IMR-90 (cell line): ENCODE measurements at regions of chr3 and their contacts with region 1.

Region 1: GRCh38 chr3:64030741-64031140 is 7.4 kb upstream of the PSMD6 start:
- DNase-seq: peak; percentile 60
- ATAC-seq: peak; percentile 97
- H3K4me3 ChIP-seq: peak overlapping the region; percentile 20; the same call in 1 of the 2 replicates
- H3K27ac ChIP-seq: no peak overlapping the region
- H3K4me1 ChIP-seq: peaks cover 3% of the 10 kb centered on the region; the same call in 1 of the 2 replicates
- H3K27me3 ChIP-seq: peaks cover 4% of the 10 kb centered on the region
- CTCF ChIP-seq: peak; percentile 90
- POLR2A ChIP-seq: peak; percentile 52; the same call in 1 of the 2 replicates
- RAD21 ChIP-seq: peak; percentile 97

Region 2: GRCh38 chr3:63855333-63855917 is 175.3 kb before region 1 on chr3:
- CTCF ChIA-PET with region 1: no interaction called
- POLR2A ChIA-PET with region 1: no interaction called
- dilution Hi-C with region 1: no loop called
- in situ Hi-C with region 1: no loop called
- intact Hi-C with region 1: no loop called
- DNase-seq: no peak
- ATAC-seq: peak; percentile 59
- H3K4me3 ChIP-seq: no peak overlapping the region
- H3K27ac ChIP-seq: no peak overlapping the region
- H3K4me1 ChIP-seq: peaks cover 1% of the 10 kb centered on the region; the same call in 1 of the 2 replicates
- H3K27me3 ChIP-seq: no peaks in the 10 kb centered on the region
- CTCF ChIP-seq: no peak
- POLR2A ChIP-seq: no peak
- RAD21 ChIP-seq: no peak

Region 3: GRCh38 chr3:64224826-64225610 is 194.3 kb after region 1 on chr3 and contains the start of gene PRICKLE2:
- CTCF ChIA-PET with region 1: interaction called, 3 read pairs
- POLR2A ChIA-PET with region 1: no interaction called
- dilution Hi-C with region 1: no loop called
- in situ Hi-C with region 1: loop called (anchors 25 kb)
- intact Hi-C with region 1: loop called (anchors 2 kb)
- DNase-seq: peak; percentile 96
- ATAC-seq: peak; percentile 73
- H3K4me3 ChIP-seq: peak within 1 kb of the TSS; percentile 38
- H3K27ac ChIP-seq: peak within 1 kb of the TSS; percentile 89
- H3K4me1 ChIP-seq: peaks cover 32% of the 10 kb centered on the region
- H3K27me3 ChIP-seq: no peaks in the 10 kb centered on the region
- CTCF ChIP-seq: peak; percentile 49
- POLR2A ChIP-seq: peak; percentile 67
- RAD21 ChIP-seq: peak; percentile 70
- total RNA-seq, gene PRICKLE2: 14.2 and 16.7 TPM in 2 replicates

Region 4: DNA sequence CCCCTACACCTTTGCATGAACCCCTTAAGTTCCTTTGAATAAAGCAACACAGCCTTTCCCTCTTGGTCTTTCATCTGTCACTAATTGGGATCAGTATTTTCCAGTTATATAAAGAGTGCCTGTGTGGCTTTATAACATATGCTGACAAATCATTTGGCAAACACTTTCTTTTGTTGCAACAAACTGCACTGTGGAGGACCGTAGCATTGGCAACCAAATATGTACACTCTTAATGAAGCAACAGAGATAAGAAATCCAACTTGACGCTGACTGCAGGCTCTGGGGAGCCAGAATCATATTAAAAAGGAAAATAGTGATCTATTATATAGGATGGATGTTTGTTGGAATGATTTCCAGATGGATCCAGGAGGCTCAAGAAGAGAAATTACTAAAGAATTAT is 314.6 kb after region 1 on chr3:
- CTCF ChIA-PET with region 1: no interaction called
- POLR2A ChIA-PET with region 1: no interaction called
- dilution Hi-C with region 1: no loop called
- in situ Hi-C with region 1: no loop called
- intact Hi-C with region 1: loop called (anchors 5 kb)
- DNase-seq: peak; percentile 89
- ATAC-seq: peak; percentile 4
- H3K4me3 ChIP-seq: no peak overlapping the region
- H3K27ac ChIP-seq: peak overlapping the region; percentile 77
- H3K4me1 ChIP-seq: peaks cover 30% of the 10 kb centered on the region
- H3K27me3 ChIP-seq: no peaks in the 10 kb centered on the region
- CTCF ChIP-seq: no peak
- POLR2A ChIP-seq: no peak
- RAD21 ChIP-seq: no peak

Region 5: GRCh38 chr3:64405211-64405835 is 374.6 kb after region 1 on chr3:
- CTCF ChIA-PET with region 1: no interaction called
- POLR2A ChIA-PET with region 1: no interaction called
- dilution Hi-C with region 1: no loop called
- in situ Hi-C with region 1: loop called (anchors 5 kb)
- intact Hi-C with region 1: no loop called
- DNase-seq: peak; percentile 67
- ATAC-seq: peak; percentile 82
- H3K4me3 ChIP-seq: no peak overlapping the region
- H3K27ac ChIP-seq: no peak overlapping the region; the same call in 1 of the 2 replicates
- H3K4me1 ChIP-seq: peaks cover 7% of the 10 kb centered on the region; the same call in 1 of the 2 replicates
- H3K27me3 ChIP-seq: no peaks in the 10 kb centered on the region
- CTCF ChIP-seq: no peak
- POLR2A ChIP-seq: no peak
- RAD21 ChIP-seq: no peak

Region 6: DNA sequence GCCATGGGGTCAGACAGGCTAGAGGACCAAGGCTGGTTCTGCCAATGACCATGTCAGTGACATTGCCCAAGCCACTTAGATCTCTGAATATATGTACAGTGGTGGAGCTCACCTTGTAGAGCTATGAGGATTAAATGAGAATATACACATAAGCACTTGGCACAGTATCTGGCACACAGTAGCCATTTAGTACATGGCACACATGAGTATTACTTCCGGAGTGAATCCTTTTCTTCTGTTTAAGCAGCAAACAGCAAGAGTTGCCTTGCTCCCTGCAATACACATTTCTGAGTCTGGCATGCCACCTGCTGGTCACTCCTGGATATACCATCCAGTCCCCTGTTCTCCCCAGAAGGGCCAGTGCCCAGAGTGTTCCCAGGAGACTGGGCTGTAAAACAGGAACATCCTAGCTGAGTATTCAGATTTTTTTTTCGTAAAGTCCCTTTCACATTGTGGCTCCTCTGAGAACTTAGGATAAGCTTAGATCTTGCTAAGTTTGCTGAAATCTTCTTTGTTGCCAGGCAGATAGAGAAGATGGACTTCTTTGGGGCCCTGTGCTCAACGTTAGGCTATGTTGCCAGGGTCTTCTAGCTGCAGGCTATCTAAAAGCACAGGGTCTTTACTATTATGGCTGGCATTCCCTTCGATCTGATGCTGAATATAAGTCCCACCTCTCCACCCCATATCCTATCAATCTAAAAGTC is 453.7 kb after region 1 on chr3:
- CTCF ChIA-PET with region 1: interaction called, 5 read pairs
- POLR2A ChIA-PET with region 1: no interaction called
- dilution Hi-C with region 1: no loop called
- in situ Hi-C with region 1: loop called (anchors 5 kb)
- intact Hi-C with region 1: loop called (anchors 1 kb)
- DNase-seq: peak; percentile 80
- ATAC-seq: peak; percentile 100
- H3K4me3 ChIP-seq: no peak overlapping the region
- H3K27ac ChIP-seq: no peak overlapping the region
- H3K4me1 ChIP-seq: no peaks in the 10 kb centered on the region
- H3K27me3 ChIP-seq: no peaks in the 10 kb centered on the region
- CTCF ChIP-seq: peak; percentile 92
- POLR2A ChIP-seq: 0 out of 2 replicates have a peak, but pooled peaks have one; percentile 34
- RAD21 ChIP-seq: peak; percentile 99